Right ventricle myocardium inferior (tissue), 1 donor: ENCODE measurements at regions of chr4 and their contacts with region 1.

Region 1: DNA sequence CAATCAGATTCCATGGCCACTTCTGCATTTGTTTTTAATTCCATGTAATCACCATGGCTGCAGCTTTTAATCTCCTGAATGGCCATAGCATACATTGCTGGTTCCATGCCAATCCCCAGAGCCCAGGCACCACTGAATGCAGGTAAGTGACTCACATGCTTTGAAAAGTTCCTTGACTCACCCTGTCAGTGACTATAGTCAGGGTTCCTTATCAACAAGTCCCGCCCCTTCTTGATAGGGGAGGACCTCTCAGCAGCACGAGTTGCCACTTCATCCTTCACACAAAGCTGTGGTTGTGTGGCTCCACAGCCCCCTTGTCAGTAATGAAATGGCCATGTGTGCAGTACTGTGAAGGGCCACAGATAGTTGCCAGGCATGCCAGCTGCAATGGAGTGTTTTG is 516.6 kb downstream of the PPARGC1A start:
- DNase-seq: no peak
- ATAC-seq: peak; percentile 88

Region 2: GRCh38 chr4:23455456-23456158 is 82.3 kb after region 1 on chr4:
- intact Hi-C with region 1: loop called (anchors 5 kb)
- DNase-seq: no peak
- ATAC-seq: peak; percentile 75

Region 3: GRCh38 chr4:23584024-23584423 is 210.8 kb after region 1 on chr4:
- intact Hi-C with region 1: no loop called
- DNase-seq: no peak
- ATAC-seq: no peak

Region 4: GRCh38 chr4:23889814-23890341 is 516.6 kb after region 1 on chr4 and contains the start of gene PPARGC1A:
- intact Hi-C with region 1: loop called (anchors 2 kb)
- DNase-seq: peak; percentile 55
- ATAC-seq: peak; percentile 92
- total RNA-seq, gene PPARGC1A: 77.5 TPM

Region 5: DNA sequence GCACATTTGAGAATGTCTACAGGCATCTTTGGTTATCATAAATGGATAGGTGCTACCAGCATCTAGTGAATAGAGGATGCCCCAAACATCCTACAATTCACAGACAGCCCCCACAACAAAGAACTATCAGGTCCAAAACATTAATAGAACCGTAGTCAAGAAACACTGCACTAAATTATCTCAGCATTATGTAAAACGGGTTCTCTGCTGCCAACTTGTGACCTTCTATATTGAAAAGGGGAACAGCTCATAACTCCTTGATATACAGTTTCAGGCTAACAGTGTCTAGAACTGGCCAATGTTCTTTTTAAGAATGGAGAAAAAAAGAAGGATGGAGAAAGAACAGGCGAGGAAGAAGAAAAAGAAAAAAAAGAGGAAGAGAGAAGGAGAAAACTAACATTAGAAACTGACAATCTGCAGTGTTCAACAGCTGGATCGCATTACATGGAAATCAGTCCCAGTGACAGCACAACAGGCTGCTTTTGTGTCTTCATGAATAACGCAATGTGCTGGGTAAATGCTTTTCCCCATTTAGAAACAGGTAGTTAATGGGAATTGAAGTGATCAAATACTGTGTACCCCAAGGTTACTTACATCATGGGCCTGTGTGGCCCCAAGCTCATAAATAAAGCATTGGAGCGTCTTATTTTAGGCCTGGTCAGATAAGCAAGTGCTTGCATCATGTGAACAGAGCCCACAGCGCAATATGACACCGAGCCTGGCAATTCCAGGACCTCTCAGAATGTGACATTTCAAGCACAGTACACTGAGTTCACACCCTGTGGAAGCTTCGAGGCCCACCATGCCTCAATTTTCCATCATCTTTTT is 871.6 kb after region 1 on chr4:
- intact Hi-C with region 1: loop called (anchors 5 kb)
- DNase-seq: peak; percentile 77
- ATAC-seq: peak; percentile 94